Endothelial cell of umbilical vein (primary cell): ENCODE measurements at regions of chr12 and their contacts with region 1.

Region 1: DNA sequence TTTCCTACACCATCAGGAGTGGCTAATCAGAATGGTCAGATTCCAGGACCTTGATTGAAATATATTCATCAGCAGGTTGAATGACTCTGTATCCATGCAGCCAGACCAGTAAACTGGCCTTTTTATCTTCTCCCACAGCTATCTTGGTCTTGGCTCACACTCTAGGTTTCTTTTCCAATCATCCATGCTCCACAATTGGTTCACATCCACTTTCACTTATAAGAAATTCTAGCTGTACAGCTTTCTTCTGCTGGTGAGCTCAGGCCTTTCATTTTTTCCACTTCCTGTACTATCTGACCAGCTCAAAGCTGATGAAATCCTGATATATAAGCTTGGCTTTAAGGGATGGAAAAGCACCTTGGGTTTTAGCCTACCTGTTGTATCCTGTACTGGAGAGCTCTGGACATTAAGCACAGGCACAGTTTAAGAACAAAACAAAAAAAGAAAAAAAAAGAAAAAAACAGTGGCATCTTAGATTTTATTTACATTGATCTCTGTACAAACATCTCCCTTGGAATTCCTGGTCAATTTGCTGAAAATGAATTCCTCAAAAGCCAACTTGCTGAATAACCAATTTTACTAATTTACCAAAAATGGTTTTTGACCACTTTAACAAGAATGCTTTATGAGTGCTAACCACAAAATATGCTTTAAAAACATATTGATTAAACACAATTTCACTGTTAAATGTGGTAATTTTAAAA is 91.6 kb upstream of the PAWR start:
- DNase-seq: peak; percentile 31
- H3K4me3 ChIP-seq: no peak overlapping the region
- H3K27ac ChIP-seq: no peak overlapping the region
- H3K4me1 ChIP-seq: no peaks in the 10 kb centered on the region
- H3K27me3 ChIP-seq: no peaks in the 10 kb centered on the region
- CTCF ChIP-seq: no peak
- POLR2A ChIP-seq: no peak

Region 2: DNA sequence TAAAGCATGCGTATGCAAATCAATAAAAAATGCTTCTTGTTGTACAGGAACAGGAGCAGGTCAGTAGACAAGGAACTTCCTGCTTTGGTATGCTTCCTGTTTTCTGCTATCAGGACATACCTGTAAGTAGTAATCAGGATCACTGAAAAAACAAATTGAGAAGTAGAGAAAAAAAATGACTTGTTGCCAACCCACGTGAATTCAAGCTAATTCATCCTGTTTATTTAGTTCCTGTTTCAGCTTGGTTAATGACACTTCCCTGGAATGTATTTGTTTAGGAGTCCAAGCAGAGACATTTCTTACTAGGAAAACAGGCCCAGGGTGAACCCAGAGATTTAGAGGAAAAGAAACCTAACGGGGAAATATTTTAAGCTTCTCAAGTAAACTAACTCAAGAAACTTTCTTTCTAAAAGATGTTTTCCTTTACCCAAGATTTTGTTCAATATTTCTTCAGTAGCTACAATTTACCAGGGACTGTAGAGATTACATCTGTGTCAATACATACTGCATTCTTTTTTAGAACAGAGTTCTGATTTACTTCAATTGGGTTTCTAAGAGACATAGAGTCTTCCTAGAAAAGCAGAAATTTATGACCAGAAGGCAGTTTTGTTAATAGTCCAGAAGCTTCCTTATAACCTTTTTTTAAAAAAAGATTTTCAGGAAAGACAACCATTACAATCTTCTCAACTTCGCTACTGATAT is 215.7 kb before region 1 on chr12:
- CTCF ChIA-PET with region 1: no interaction called
- POLR2A ChIA-PET with region 1: no interaction called
- dilution Hi-C with region 1: no loop called
- intact Hi-C with region 1: no loop called
- DNase-seq: peak; percentile 89
- H3K4me3 ChIP-seq: no peak overlapping the region
- H3K27ac ChIP-seq: peak overlapping the region; percentile 65
- H3K4me1 ChIP-seq: peaks cover 28% of the 10 kb centered on the region
- H3K27me3 ChIP-seq: no peaks in the 10 kb centered on the region
- CTCF ChIP-seq: no peak
- POLR2A ChIP-seq: peak; percentile 53

Region 3: DNA sequence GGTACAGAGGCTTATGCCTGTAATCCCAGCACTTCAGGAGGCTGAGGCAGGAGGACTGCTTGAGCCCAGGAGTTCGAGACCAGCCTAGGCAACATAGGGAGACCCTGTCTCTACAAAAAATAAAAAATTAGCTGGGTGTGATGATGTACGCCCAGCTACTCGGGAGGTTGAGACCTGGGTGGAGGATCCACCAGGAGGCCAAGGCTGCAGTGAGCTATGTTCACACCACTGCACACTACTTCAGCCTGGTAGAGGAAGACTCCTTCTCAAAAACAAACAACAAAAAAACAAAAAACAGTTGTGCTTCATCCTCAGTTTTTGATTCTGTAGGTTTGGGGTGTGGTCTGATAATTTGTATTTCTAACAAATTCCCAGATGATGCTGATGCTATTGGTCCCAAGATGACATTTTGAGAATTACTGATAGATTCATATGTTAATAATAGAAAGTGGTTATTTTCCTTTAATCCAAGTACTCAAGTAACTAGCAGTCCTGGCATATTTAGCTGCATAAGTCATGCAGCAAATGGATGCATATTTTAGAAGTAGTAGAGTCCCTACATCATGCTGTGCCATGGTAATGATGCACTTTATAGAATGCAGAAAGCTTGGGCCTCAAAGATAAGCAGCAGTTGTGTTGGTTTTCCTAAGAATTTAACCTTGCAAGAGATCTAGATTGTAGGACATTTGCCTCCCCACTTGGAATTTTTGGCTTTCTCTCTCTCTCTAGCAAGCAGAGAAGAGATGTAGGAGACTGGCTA is 15.5 kb before region 1 on chr12:
- CTCF ChIA-PET with region 1: interaction called, 13 read pairs
- POLR2A ChIA-PET with region 1: no interaction called
- dilution Hi-C with region 1: no loop called
- intact Hi-C with region 1: no loop called
- DNase-seq: peak; percentile 3
- H3K4me3 ChIP-seq: no peak overlapping the region
- H3K27ac ChIP-seq: no peak overlapping the region
- H3K4me1 ChIP-seq: no peaks in the 10 kb centered on the region
- H3K27me3 ChIP-seq: no peaks in the 10 kb centered on the region
- CTCF ChIP-seq: no peak
- POLR2A ChIP-seq: no peak